Gastrocnemius medialis (tissue), 4 donors: ENCODE measurements at regions of chr7 and their contacts with region 1.

Region 1: DNA sequence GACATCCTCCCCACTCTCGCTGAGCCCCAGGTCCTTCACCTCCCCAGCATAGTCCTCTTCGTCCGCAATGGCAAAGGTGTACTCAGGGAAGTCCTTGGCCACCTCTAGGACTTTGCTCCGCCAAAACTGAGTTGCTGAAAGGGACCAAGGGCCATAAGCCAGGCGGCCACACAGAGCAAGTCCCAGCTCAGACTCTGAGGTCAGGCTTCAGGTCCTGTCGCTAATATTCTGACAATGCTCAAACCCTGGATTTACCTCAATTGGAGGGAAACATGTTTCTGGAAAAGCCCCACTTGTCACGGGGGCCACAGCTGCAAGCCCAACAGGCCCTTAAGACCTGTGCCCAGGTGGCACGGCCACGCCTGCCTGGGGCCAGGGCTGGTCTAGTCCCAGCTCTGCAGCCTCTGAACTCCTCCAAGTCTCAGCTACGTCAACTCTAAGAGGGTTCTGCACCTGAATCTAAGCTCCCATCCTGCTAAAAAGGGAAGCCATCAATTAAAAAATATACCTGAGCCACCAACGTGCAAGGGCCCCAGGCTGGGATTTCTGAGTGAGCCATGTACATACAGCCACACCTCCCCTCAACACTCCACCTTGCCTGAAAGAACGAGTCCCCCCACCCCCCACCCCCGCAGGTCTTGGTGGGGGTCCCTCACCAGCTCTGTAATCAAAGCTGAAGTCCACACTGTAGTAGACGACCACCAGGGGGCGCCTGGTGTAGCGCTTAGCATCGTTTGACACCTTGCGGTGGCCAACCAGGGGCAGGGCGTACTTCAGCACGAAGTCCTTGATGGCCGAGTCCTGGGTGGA is 22.9 kb downstream of the PDIA4 start:
- DNase-seq: peak; percentile 59 to 72
- ATAC-seq: peak; percentile 82 to 94
- H3K4me3 ChIP-seq: no peak overlapping the region
- H3K27ac ChIP-seq: no peak overlapping the region
- H3K4me1 ChIP-seq: no peaks in the 10 kb centered on the region
- H3K27me3 ChIP-seq: no peaks in the 10 kb centered on the region
- CTCF ChIP-seq: peak; percentile 76 to 92 (median 87)
- POLR2A ChIP-seq: no peak

Region 2: GRCh38 chr7:149067876-149068275 is 62.4 kb after region 1 on chr7:
- in situ Hi-C with region 1: no loop called
- intact Hi-C with region 1: loop called (anchors 1 kb)
- DNase-seq: no peak
- ATAC-seq: no peak
- H3K4me3 ChIP-seq: no peak overlapping the region
- H3K27ac ChIP-seq: no peak overlapping the region
- H3K4me1 ChIP-seq: no peaks in the 10 kb centered on the region
- H3K27me3 ChIP-seq: no peaks in the 10 kb centered on the region
- CTCF ChIP-seq: no peak
- POLR2A ChIP-seq: no peak

Region 3: GRCh38 chr7:149081914-149082313 is 76.5 kb after region 1 on chr7:
- in situ Hi-C with region 1: loop called in 3 of 4 experiments (anchors 5 to 10 kb)
- intact Hi-C with region 1: no loop called
- DNase-seq: no peak
- ATAC-seq: no peak
- H3K4me3 ChIP-seq: no peak overlapping the region
- H3K27ac ChIP-seq: no peak overlapping the region
- H3K4me1 ChIP-seq: no peaks in the 10 kb centered on the region
- H3K27me3 ChIP-seq: no peaks in the 10 kb centered on the region
- CTCF ChIP-seq: no peak
- POLR2A ChIP-seq: no peak